GM10248 (cell line): ENCODE measurements at regions of chr15 and their contacts with region 1.

Region 1: DNA sequence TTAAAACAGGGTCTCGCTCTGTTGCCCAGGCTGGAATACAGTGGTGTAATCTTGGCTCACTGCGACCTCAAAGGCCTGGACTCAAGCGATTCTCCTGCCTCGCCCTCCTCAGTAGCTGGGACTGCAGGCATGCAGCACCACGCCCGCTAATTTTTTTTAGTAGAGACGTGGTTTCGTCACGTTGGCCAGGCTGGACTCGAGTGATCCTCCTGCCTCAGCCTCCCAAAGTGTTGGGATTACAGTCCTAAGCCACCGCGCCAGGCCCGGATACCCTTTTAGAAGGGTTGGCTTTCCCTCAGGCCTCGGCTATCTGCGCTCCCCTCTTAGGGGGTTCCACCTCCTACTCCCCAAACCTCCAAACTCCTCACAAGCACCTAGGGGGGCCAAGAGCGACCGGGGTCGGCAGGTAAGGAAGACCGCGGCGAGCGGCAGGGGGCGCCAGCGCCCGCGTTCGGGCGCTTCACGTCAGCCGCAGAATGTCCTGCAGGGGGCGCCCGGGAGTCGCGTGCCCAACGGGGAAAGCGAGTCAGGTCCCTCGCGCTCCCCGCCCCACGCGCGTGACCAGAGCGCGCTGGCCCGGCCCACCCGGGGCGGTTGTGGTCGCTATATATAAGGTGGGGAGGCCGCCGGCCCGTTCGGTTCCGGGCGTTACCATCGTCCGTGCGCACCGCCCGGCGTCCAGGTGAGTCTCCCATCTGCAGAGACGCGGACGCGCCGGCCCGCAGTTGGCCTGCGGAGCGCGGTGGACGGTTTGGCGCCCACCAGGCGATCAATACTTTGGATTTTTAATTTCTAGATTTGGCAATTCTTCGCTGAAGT is 51.8 kb upstream of the GATM start:
- DNase-seq: peak; percentile 90
- CTCF ChIP-seq: peak; percentile 98

Region 2: GRCh38 chr15:45205192-45205591 is 225.0 kb before region 1 on chr15:
- CTCF ChIA-PET with region 1: interaction called, 12 read pairs
- POLR2A ChIA-PET with region 1: no interaction called
- DNase-seq: peak; percentile 69
- CTCF ChIP-seq: peak; percentile 86

Region 3: GRCh38 chr15:45378149-45378912 is 51.9 kb before region 1 on chr15 and contains the start of gene GATM:
- CTCF ChIA-PET with region 1: interaction called, 12 read pairs
- POLR2A ChIA-PET with region 1: no interaction called
- DNase-seq: peak; percentile 94
- CTCF ChIP-seq: no peak

Region 4: GRCh38 chr15:45414215-45414885 is 15.8 kb before region 1 on chr15:
- CTCF ChIA-PET with region 1: interaction called, 10 read pairs
- POLR2A ChIA-PET with region 1: no interaction called
- DNase-seq: no peak
- CTCF ChIP-seq: no peak

Region 5: DNA sequence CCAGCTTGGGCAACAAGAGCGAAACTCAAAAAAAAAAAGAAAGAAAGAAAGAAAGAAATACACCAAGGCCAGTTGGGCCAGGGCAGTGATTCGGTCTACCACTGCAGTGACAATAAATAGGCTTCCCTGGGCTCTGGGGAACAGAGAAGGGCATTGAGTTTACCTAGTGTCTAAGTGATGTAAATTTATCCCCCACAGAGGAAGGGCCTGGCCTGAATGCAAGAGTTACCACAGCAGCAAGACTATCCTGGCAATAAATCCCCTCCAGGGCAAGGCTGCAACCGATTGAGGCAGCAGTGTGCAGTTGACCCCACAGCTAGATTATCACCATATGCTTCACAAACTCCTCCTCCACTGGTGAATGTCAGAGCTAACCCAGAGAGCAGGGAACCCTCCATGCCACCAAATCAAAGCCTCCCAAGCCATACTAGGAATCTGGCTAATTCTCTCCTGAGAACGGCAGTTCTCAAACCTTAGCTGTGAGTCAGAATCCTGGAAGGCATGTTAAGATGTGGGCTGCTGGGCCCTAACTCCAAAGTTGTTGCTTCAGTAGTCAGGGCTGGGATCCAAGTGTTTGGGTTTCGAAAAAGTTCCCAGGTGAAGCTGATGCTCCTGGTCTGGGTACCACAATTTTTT is 12.4 kb after region 1 on chr15:
- CTCF ChIA-PET with region 1: interaction called, 24 read pairs
- POLR2A ChIA-PET with region 1: no interaction called
- DNase-seq: no peak
- CTCF ChIP-seq: no peak

Region 6: DNA sequence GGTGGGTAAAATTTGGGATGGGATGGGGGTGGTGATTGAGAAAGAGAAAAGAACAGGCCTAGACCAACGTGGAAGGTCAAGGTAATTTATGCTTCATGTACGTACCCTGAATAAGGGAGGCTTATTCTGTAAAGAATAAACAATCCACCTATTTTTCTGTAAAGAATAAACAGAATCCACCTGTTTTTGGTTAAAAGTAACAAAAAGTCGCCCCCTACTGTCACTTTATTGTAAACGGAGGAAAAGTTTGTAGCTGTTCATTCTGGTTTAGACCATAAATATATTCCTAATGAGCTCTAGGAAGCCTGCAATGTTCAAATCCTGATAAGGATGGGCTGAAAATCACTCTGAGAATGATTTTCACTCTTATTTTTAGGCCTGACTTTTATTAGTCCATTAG is 181.1 kb after region 1 on chr15:
- CTCF ChIA-PET with region 1: interaction called, 21 read pairs
- POLR2A ChIA-PET with region 1: no interaction called
- DNase-seq: peak; percentile 32
- CTCF ChIP-seq: peak; percentile 36